ENCODE measurements at regions of chr20 and their contacts with region 1.

Region 1: DNA sequence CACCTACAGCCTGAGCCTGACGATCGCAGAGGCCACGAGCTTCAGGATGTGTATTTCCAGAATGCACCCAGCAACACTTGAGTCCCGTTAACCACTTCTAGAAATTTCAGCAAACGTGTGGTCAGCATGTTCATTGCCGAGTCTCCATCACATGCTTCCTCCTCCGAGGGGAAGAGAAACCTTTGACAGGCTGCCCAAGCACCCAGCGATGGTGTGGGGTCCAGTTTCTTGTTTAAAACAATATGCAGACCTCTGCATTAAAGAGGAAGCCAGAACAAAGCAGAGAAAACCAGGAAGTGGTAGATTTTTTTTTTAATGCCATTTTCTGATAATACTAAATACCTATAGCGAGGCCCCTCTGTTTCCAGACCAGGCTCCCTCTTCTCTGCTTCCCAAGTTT is 71.9 kb downstream of the GNAS-AS1 start:
- DNase-seq: no peak
- H3K4me3 ChIP-seq: no peak overlapping the region
- H3K27ac ChIP-seq: no peak overlapping the region
- H3K4me1 ChIP-seq: no peaks in the 10 kb centered on the region
- H3K27me3 ChIP-seq: peaks cover 4% of the 10 kb centered on the region
- CTCF ChIP-seq: no peak

Region 2: GRCh38 chr20:58698741-58699622 is 79.8 kb before region 1 on chr20:
- CTCF ChIA-PET with region 1: no interaction called
- dilution Hi-C with region 1: loop called (anchors 5 kb)
- in situ Hi-C with region 1: no loop called
- intact Hi-C with region 1: no loop called
- DNase-seq: no peak
- H3K4me3 ChIP-seq: no peak overlapping the region
- H3K27ac ChIP-seq: no peak overlapping the region
- H3K4me1 ChIP-seq: no peaks in the 10 kb centered on the region
- H3K27me3 ChIP-seq: no peaks in the 10 kb centered on the region
- CTCF ChIP-seq: no peak

Measured in mammary epithelial cell (primary cell).